ENCODE measurements at regions of chr13 and their contacts with region 1.

Region 1: DNA sequence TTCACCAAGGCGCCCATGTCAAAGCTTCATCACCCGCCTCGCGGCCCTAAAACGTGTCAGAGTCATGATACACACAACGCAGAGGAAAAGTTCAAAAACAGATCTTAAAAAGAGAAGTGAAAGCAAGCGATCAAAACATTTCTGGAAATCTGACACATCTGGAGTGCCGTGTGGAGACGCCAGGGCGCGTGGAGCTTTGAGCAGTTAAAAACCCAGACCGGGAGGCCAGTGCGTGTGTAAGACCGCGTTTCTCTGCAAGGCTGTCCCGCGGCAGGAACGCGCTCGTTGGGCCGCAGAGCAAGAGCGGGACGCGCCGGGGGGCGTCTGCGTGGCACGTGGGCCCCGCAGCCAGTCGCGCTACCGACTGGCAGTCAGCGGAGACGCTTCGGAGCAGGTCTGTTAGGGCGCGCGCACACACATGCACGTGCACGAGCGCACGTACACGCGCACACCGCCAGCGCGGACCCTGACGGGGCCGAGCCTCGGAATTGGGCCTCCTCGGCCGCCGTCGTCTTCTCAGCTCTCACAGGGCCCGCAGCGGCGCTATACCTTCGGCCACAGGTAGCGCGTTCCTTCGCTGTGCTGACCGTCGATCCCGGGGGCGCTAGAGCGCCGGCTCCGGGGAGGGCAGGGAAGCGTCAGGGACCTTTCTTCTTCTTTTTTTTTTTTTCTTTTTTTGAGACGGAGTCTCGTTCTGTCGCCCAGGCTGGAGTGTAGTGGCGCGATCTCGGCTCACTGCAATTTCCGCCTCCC is 35.8 kb downstream of the RNF6 start:
- DNase-seq: peak; percentile 92
- ATAC-seq: peak; percentile 96

Region 2: DNA sequence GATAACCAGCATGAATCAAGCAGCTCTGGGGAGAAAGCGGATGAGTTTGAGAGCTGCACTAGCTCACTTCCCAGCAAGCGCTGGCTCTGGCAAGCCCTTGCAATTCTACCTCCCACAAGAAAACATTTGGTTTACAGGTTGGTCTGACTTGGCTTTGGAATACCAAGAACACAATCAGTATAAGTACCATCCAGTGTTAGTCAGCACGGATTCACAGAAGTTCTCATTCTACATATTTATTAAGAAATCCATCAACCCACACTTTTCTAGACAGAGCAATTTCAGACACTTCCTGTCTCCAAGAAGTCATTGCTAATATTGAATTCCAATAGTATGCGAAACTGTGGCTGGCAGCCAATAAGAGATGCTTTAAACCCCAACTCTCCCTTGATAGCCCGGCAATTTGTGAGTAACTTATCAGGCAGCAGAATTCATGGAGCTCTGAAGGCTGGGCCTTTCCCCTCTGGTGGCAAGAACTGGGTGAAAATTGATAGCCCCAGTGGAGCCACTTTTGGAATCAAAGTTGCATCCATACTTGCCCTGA is 311.7 kb after region 1 on chr13:
- intact Hi-C with region 1: loop called (anchors 2 kb)
- DNase-seq: no peak
- ATAC-seq: no peak

Measured in Right ventricle myocardium superior (tissue), 1 donor.